ENCODE measurements at regions of chr1 and their contacts with region 1.

Region 1: GRCh38 chr1:228109073-228109961 is at the start of gene MRPL55:
- DNase-seq: peak; percentile 96 to 100 (median 98)
- ATAC-seq: peak; percentile 92
- H3K4me3 ChIP-seq: peak within 1 kb of the TSS; percentile 99
- H3K4me3 Mint-ChIP-seq: peak within 1 kb of the TSS; percentile 92
- H3K27ac ChIP-seq: peak within 1 kb of the TSS; percentile 84 to 90
- H3K27ac Mint-ChIP-seq: peak within 1 kb of the TSS; percentile 93
- H3K4me1 ChIP-seq: peaks cover 28% of the 10 kb centered on the region
- H3K4me1 Mint-ChIP-seq: peaks cover 32% of the 10 kb centered on the region
- H3K27me3 ChIP-seq: no peaks in the 10 kb centered on the region
- H3K27me3 Mint-ChIP-seq: no peaks in the 10 kb centered on the region
- CTCF ChIP-seq: no peak
- total RNA-seq, gene MRPL55: 120 to 128 TPM

Region 2: GRCh38 chr1:227999056-227999930 is 110.0 kb before region 1 on chr1:
- CTCF ChIA-PET with region 1: no interaction called
- POLR2A ChIA-PET with region 1: no interaction called
- intact Hi-C with region 1: loop called in 1 of 2 experiments (anchors 10 kb)
- DNase-seq: peak; percentile 46 to 83 (median 63)
- ATAC-seq: peak; percentile 98
- H3K4me3 ChIP-seq: no peak overlapping the region
- H3K4me3 Mint-ChIP-seq: no peak overlapping the region
- H3K27ac ChIP-seq: no peak overlapping the region
- H3K27ac Mint-ChIP-seq: no peak overlapping the region
- H3K4me1 ChIP-seq: peaks cover 2% of the 10 kb centered on the region
- H3K4me1 Mint-ChIP-seq: no peaks in the 10 kb centered on the region
- H3K27me3 ChIP-seq: peaks cover 9 to 11% of the 10 kb centered on the region in 2 experiments
- H3K27me3 Mint-ChIP-seq: peaks cover 43% of the 10 kb centered on the region
- CTCF ChIP-seq: peak; percentile 62

Region 3: DNA sequence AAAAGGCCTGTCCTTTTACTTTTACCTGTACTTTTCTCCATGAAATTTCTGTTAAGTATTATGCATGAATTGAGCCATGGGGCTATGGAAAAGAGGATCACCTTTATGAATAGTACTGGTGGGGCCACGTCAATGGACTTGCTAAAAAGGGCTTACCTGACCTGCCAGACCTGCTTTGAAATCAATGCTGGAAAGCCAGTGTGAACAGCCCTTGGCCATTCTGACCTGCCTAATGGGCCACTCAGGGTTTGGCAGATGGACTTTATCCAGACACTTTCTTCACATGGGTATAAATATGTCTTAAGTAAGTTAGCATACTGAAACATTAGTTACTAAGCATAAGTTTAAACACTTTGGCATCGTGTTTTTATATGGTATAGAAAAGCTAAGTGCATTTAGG is 22.4 kb after region 1 on chr1:
- CTCF ChIA-PET with region 1: interaction called, 8 read pairs
- POLR2A ChIA-PET with region 1: interaction called, 8 read pairs
- intact Hi-C with region 1: loop called in 1 of 2 experiments (anchors 2 kb)
- DNase-seq: no peak
- ATAC-seq: no peak
- H3K4me3 ChIP-seq: no peak overlapping the region
- H3K4me3 Mint-ChIP-seq: no peak overlapping the region
- H3K27ac ChIP-seq: no peak overlapping the region
- H3K27ac Mint-ChIP-seq: no peak overlapping the region
- H3K4me1 ChIP-seq: peaks cover 4% of the 10 kb centered on the region
- H3K4me1 Mint-ChIP-seq: peaks cover 5% of the 10 kb centered on the region
- H3K27me3 ChIP-seq: peaks cover 4 to 8% of the 10 kb centered on the region in 2 experiments
- H3K27me3 Mint-ChIP-seq: peaks cover 22% of the 10 kb centered on the region
- CTCF ChIP-seq: no peak

Region 4: GRCh38 chr1:228212966-228213844 is 103.9 kb after region 1 on chr1:
- CTCF ChIA-PET with region 1: interaction called, 5 read pairs
- POLR2A ChIA-PET with region 1: no interaction called
- intact Hi-C with region 1: loop called in 1 of 2 experiments (anchors 1 kb)
- DNase-seq: peak; percentile 83 to 96 (median 90)
- ATAC-seq: peak; percentile 89
- H3K4me3 ChIP-seq: peak overlapping the region; percentile 64
- H3K4me3 Mint-ChIP-seq: peak overlapping the region; percentile 92
- H3K27ac ChIP-seq: peak overlapping the region in 1 of 2 donors; percentile 21
- H3K27ac Mint-ChIP-seq: peak overlapping the region; percentile 86
- H3K4me1 ChIP-seq: peaks cover 22% of the 10 kb centered on the region
- H3K4me1 Mint-ChIP-seq: peaks cover 12% of the 10 kb centered on the region
- H3K27me3 ChIP-seq: no peaks in the 10 kb centered on the region
- H3K27me3 Mint-ChIP-seq: no peaks in the 10 kb centered on the region
- CTCF ChIP-seq: peak; percentile 59

Region 5: GRCh38 chr1:228494970-228495853 is 385.9 kb after region 1 on chr1:
- CTCF ChIA-PET with region 1: no interaction called
- POLR2A ChIA-PET with region 1: no interaction called
- intact Hi-C with region 1: no loop called
- DNase-seq: no peak
- ATAC-seq: no peak
- H3K4me3 ChIP-seq: no peak overlapping the region
- H3K4me3 Mint-ChIP-seq: no peak overlapping the region
- H3K27ac ChIP-seq: no peak overlapping the region
- H3K27ac Mint-ChIP-seq: no peak overlapping the region
- H3K4me1 ChIP-seq: peaks cover 13% of the 10 kb centered on the region
- H3K4me1 Mint-ChIP-seq: peaks cover 21% of the 10 kb centered on the region
- H3K27me3 ChIP-seq: no peaks in the 10 kb centered on the region
- H3K27me3 Mint-ChIP-seq: no peaks in the 10 kb centered on the region
- CTCF ChIP-seq: no peak

Measured in CD4-positive, alpha-beta T cell (primary cell).